Spleen (tissue), 13 donors: ENCODE measurements at regions of chr19 and their contacts with region 1.

Region 1: DNA sequence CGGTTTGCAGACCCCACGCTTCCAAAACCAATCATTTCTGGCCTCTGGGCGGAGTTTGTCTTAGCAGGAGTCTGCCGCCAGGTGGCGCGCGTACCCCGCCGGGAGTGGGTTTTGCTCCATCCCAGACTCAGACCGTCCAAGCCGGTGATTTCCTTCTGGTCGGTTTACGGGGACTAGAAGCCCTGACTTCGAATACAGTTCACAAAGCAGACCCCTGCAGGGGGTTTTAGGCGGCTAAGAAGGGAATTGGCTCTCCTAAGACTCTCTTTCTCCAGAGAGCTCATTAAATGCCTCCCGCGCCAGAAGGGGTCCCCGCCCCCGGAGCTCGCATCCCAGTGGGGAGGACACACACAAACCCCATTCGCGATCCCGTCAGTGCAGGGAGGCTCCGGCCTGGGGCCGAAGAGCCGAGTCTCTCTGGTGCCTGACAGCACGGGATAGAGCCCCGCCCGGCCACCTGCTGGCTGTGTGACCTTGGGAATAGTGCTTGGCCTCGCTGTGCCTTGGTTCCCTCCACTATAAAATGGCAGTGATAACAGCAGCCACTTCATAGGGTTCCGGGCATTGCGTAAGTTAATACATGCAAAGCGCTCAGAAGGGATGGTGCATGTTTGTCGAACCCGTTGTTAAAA is 8.6 kb upstream of the NUP62 start:
- DNase-seq: peak; percentile 94
- H3K4me3 ChIP-seq: peak overlapping the region in 4 of 8 donors; percentile 16 to 57 (median 28)
- H3K27ac ChIP-seq: peak overlapping the region in 4 of 8 donors; percentile 30 to 57 (median 39)
- H3K4me1 ChIP-seq: peaks cover 9 to 38% (median 15%) of the 10 kb centered on the region in 6 donors
- H3K27me3 ChIP-seq: peaks cover 0 to 4% (median 0%) of the 10 kb centered on the region in 7 donors
- CTCF ChIP-seq: peak; percentile 84 to 96 (median 92)
- POLR2A ChIP-seq: no peak

Region 2: DNA sequence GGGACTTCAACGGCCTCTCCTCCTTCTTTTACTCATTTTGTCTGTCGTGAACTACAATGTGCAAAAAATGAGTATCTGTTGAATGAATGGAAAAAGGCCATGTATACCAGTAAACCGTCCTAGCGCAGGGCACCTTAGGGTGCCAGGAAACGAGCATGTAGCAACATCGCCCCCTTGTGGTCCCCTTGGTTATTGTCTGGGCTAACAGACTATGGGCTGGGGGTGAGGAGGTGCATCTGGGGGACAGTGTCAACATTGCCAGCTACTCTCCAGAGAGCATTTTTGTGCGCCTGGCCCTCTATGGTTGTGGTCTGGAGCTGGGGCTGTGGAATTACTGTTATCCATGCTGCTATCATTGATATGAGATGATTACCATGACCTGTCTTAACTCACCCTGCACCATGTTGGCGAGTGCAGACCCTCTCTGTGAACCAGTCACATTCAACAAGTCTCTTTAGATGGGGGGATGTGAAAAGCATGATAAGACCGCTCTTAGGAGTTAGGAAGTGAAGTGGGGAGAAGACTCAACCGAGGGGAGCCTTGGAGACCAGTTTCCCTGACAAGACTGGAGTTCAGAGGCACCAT is 45.9 kb after region 1 on chr19:
- intact Hi-C with region 1: loop called (anchors 5 kb)
- DNase-seq: peak; percentile 87
- H3K4me3 ChIP-seq: no peak overlapping the region
- H3K27ac ChIP-seq: no peak overlapping the region
- H3K4me1 ChIP-seq: peaks cover 0 to 11% (median 2%) of the 10 kb centered on the region in 6 donors
- H3K27me3 ChIP-seq: no peaks in the 10 kb centered on the region
- CTCF ChIP-seq: peak; percentile 75 to 91 (median 87)
- POLR2A ChIP-seq: no peak